T-cell (primary cell): ENCODE measurements at regions of chr17 and their contacts with region 1.

Region 1: DNA sequence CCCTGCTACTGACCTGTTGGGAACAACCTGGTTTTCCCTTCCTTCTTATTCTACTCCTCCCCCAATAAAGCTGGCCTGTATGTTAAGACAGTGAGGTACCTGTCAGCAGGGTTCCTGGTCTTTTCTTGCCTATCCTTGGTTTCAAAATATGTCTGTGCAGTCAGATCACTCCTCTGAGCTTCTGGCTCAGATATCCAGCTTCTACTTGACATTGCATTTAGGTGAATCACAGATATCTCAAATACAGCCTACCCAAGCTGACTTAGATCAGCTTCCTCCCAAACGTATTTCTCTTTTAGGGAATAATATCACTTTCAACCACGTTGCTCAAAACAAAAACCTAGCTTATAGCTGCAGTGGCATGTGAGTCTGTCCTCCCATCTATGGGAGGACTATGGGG is 48.7 kb downstream of the TEX14 start:
- DNase-seq: no peak
- ATAC-seq: no peak
- H3K4me3 ChIP-seq: no peak overlapping the region
- H3K4me3 Mint-ChIP-seq: no peak overlapping the region
- H3K27ac ChIP-seq: no peak overlapping the region
- H3K27ac Mint-ChIP-seq: no peak overlapping the region
- H3K4me1 ChIP-seq: no peaks in the 10 kb centered on the region
- H3K4me1 Mint-ChIP-seq: no peaks in the 10 kb centered on the region
- H3K27me3 ChIP-seq: no peaks in the 10 kb centered on the region
- H3K27me3 Mint-ChIP-seq: no peaks in the 10 kb centered on the region

Region 2: DNA sequence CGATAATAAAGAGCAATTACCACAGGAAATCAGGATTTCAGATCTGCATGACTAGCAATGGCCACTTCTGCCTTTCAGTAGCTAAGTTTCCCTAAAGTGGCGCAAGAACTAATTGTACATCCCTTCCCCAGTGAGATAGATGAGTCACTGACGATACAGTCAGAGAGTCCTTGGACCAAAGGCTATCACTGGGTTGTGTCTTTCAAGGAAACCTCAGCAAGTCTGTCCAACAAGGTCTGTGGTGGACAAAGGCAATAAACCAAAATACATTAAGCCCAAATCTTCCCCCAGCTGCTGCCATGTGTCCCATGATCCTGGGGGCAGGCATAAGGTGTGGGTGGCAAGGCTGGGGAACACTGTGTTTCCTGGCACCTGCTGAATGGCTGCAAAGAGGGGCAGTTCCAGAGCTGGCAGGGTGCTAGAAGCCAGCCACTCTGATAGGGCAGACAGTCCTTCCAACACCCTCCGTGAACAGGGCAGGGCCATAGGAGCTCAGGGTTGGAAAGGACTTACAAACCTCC is 108.2 kb before region 1 on chr17:
- CTCF ChIA-PET with region 1: no interaction called
- POLR2A ChIA-PET with region 1: interaction called in 1 of 2 experiments, 11 read pairs
- DNase-seq: no peak
- ATAC-seq: no peak
- H3K4me3 ChIP-seq: no peak overlapping the region
- H3K4me3 Mint-ChIP-seq: no peak overlapping the region
- H3K27ac ChIP-seq: no peak overlapping the region
- H3K27ac Mint-ChIP-seq: no peak overlapping the region
- H3K4me1 ChIP-seq: peaks cover 0 to 16% of the 10 kb centered on the region in 2 experiments
- H3K4me1 Mint-ChIP-seq: peaks cover 0 to 5% (median 3%) of the 10 kb centered on the region in 3 donors
- H3K27me3 ChIP-seq: peaks cover 0 to 61% of the 10 kb centered on the region in 2 experiments
- H3K27me3 Mint-ChIP-seq: peaks cover 21 to 29% of the 10 kb centered on the region in 2 donors

Region 3: DNA sequence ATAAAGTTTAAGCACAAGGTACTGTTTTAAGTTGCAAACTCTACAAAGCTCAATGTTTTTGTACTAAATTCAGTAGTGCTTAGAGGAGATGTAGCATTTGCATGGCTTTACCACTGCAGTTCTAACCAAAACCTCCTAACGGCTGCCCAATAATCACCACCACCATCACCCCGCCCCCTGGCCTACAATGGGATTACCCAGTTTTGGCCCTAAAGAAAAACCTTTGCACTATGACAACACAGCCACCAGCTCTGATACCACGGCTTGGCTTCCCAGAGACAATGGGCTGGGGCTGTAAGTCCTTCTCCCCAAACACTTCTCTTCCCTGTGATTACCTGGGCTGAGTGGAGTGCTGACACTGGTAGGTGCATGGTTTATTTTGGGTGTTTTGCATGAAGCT is 70.3 kb before region 1 on chr17:
- CTCF ChIA-PET with region 1: no interaction called
- POLR2A ChIA-PET with region 1: interaction called in 1 of 2 experiments, 14 read pairs
- DNase-seq: no peak
- ATAC-seq: no peak
- H3K4me3 ChIP-seq: no peak overlapping the region
- H3K4me3 Mint-ChIP-seq: no peak overlapping the region
- H3K27ac ChIP-seq: no peak overlapping the region
- H3K27ac Mint-ChIP-seq: no peak overlapping the region
- H3K4me1 ChIP-seq: no peaks in the 10 kb centered on the region
- H3K4me1 Mint-ChIP-seq: no peaks in the 10 kb centered on the region
- H3K27me3 ChIP-seq: no peaks in the 10 kb centered on the region
- H3K27me3 Mint-ChIP-seq: no peaks in the 10 kb centered on the region

Region 4: GRCh38 chr17:58658804-58659713 is 15.9 kb after region 1 on chr17:
- CTCF ChIA-PET with region 1: interaction called, 4 to 14 read pairs
- POLR2A ChIA-PET with region 1: no interaction called
- DNase-seq: peak; percentile 45 to 93 (median 77)
- ATAC-seq: peak; percentile 79 to 95 (median 94)
- H3K4me3 ChIP-seq: peak overlapping the region; percentile 53 to 57
- H3K4me3 Mint-ChIP-seq: peak overlapping the region; percentile 78 to 87 (median 79)
- H3K27ac ChIP-seq: peak overlapping the region; percentile 97
- H3K27ac Mint-ChIP-seq: peak overlapping the region; percentile 96 to 100
- H3K4me1 ChIP-seq: peaks cover 2 to 14% of the 10 kb centered on the region in 2 experiments
- H3K4me1 Mint-ChIP-seq: peaks cover 19 to 25% (median 20%) of the 10 kb centered on the region in 3 donors
- H3K27me3 ChIP-seq: peaks cover 0 to 2% of the 10 kb centered on the region in 2 experiments
- H3K27me3 Mint-ChIP-seq: no peaks in the 10 kb centered on the region